Mammary epithelial cell (primary cell): ENCODE measurements at regions of chr14 and their contacts with region 1.

Region 1: GRCh38 chr14:73403181-73403752 is 55.1 kb downstream of the NUMB start:
- DNase-seq: no peak
- H3K4me3 ChIP-seq: no peak overlapping the region
- H3K27ac ChIP-seq: no peak overlapping the region
- H3K4me1 ChIP-seq: no peaks in the 10 kb centered on the region
- H3K27me3 ChIP-seq: no peaks in the 10 kb centered on the region
- CTCF ChIP-seq: no peak

Region 2: GRCh38 chr14:73261520-73262426 is 141.5 kb before region 1 on chr14:
- CTCF ChIA-PET with region 1: no interaction called
- dilution Hi-C with region 1: no loop called
- in situ Hi-C with region 1: no loop called
- intact Hi-C with region 1: no loop called
- DNase-seq: no peak
- H3K4me3 ChIP-seq: no peak overlapping the region
- H3K27ac ChIP-seq: no peak overlapping the region
- H3K4me1 ChIP-seq: no peaks in the 10 kb centered on the region
- H3K27me3 ChIP-seq: no peaks in the 10 kb centered on the region
- CTCF ChIP-seq: no peak

Region 3: GRCh38 chr14:73311708-73312030 is 91.6 kb before region 1 on chr14:
- CTCF ChIA-PET with region 1: no interaction called
- dilution Hi-C with region 1: loop called (anchors 5 kb)
- in situ Hi-C with region 1: no loop called
- intact Hi-C with region 1: no loop called
- DNase-seq: no peak
- H3K4me3 ChIP-seq: no peak overlapping the region
- H3K27ac ChIP-seq: no peak overlapping the region
- H3K4me1 ChIP-seq: peaks cover 6% of the 10 kb centered on the region
- H3K27me3 ChIP-seq: no peaks in the 10 kb centered on the region
- CTCF ChIP-seq: no peak

Region 4: GRCh38 chr14:73358187-73358586 is 45.1 kb before region 1 on chr14:
- CTCF ChIA-PET with region 1: no interaction called
- dilution Hi-C with region 1: loop called (anchors 5 kb)
- in situ Hi-C with region 1: no loop called
- intact Hi-C with region 1: no loop called
- DNase-seq: no peak
- H3K4me3 ChIP-seq: no peak overlapping the region
- H3K27ac ChIP-seq: no peak overlapping the region
- H3K4me1 ChIP-seq: no peaks in the 10 kb centered on the region
- H3K27me3 ChIP-seq: no peaks in the 10 kb centered on the region
- CTCF ChIP-seq: no peak

Region 5: DNA sequence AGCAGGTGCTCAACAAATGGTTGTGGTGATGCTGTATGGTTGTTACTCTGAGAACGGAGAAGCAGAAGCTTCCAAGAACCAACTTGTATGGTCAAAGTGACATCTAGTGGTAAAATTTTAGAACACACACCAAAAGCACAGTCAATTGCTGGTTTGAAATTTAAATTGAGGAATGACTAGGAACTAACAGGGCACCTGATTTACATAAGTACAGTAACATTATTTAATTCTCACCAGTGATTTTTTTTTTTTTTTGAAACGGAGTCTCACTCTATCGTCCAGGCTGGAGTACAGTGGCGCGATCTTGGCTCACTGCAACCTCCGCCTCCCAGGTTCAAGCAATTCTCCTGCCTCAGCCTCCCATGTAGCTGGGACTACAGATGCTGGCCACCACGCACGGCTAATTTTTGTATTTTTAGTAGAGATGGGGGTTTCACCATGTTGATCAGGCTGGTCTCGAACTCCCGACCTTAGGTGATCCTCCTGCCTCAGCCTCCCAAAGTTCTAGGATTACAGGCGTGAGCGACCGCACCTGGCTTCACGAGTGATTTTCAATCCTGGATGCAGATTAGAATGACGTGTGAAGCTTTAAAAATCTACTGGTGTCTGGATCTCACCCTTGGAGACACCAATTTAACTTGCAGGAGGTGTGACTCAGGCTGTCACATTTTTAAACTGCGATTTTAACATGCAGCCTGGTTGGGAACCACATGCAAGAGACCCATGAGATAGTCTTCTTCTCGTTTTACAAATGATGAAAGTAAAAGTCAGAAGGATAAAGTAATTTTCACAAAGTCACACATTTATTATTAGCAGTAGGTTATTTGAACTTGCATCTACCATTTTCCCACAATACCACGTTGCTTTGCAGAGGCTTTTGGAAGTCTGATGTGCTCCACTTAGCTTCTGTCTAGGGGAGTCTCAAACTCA is 69.2 kb after region 1 on chr14:
- CTCF ChIA-PET with region 1: no interaction called
- dilution Hi-C with region 1: no loop called
- in situ Hi-C with region 1: no loop called
- intact Hi-C with region 1: no loop called
- DNase-seq: peak; percentile 54
- H3K4me3 ChIP-seq: no peak overlapping the region
- H3K27ac ChIP-seq: no peak overlapping the region
- H3K4me1 ChIP-seq: peaks cover 3% of the 10 kb centered on the region
- H3K27me3 ChIP-seq: no peaks in the 10 kb centered on the region
- CTCF ChIP-seq: peak; percentile 64 to 67

Region 6: GRCh38 chr14:73491256-73492042 is 88.2 kb after region 1 on chr14:
- CTCF ChIA-PET with region 1: no interaction called
- dilution Hi-C with region 1: loop called (anchors 5 kb)
- in situ Hi-C with region 1: no loop called
- intact Hi-C with region 1: no loop called
- DNase-seq: peak; percentile 74
- H3K4me3 ChIP-seq: peak overlapping the region; percentile 72 to 80 (median 78)
- H3K27ac ChIP-seq: peak overlapping the region; percentile 70
- H3K4me1 ChIP-seq: peaks cover 30% of the 10 kb centered on the region
- H3K27me3 ChIP-seq: no peaks in the 10 kb centered on the region
- CTCF ChIP-seq: no peak